ENCODE measurements at regions of chr6 and their contacts with region 1.

Region 1: GRCh38 chr6:108004861-108005260 is 46.9 kb upstream of the SEC63 start:
- DNase-seq: no peak
- H3K4me3 ChIP-seq: no peak overlapping the region
- H3K27ac ChIP-seq: no peak overlapping the region
- H3K4me1 ChIP-seq: no peaks in the 10 kb centered on the region
- H3K27me3 ChIP-seq: no peaks in the 10 kb centered on the region
- CTCF ChIP-seq: no peak

Region 2: GRCh38 chr6:107607116-107607515 is 397.7 kb before region 1 on chr6:
- CTCF ChIA-PET with region 1: no interaction called
- POLR2A ChIA-PET with region 1: no interaction called
- intact Hi-C with region 1: no loop called
- DNase-seq: peak in 1 of 2 experiments; percentile 60
- H3K4me3 ChIP-seq: no peak overlapping the region
- H3K27ac ChIP-seq: no peak overlapping the region
- H3K4me1 ChIP-seq: peaks cover 6% of the 10 kb centered on the region; the same call in 1 of the 2 replicates
- H3K27me3 ChIP-seq: no peaks in the 10 kb centered on the region
- CTCF ChIP-seq: no peak

Region 3: DNA sequence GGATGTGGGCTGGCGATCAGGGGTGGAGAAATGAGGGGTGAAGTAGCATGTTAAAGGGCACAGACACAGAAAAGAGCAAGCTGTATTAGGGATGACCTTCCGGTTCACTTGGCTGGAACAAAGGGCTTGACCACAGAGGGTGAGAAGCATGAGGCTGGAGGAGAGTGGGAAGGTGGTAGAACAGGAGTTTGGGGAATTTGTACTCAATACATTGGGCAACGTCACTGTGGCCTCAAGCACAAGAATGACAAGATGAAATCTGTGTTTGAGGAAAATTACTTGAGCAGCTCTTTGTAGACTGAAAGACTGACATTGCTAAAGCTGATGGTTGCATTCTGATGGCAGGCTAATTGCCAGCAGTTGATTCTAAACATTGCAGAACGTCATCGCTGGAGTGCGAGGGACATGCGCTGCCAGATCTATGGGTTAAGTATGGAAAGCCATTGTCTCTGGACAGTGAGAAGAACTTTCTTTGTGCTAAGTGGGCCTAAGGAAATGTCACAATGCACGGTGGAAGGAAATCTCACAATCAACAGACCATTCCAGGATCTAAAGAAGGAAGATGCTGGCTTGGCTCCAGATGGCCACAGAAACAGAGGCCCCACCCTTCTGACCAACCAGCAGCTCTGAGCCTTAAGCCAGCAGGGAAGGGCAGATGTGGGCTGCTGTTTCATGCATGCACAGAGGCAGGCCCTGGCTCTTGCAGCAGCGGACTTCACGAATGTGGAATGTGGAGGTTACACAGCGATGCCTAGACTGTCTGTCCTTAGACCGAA is 358.9 kb before region 1 on chr6:
- CTCF ChIA-PET with region 1: no interaction called
- POLR2A ChIA-PET with region 1: no interaction called
- intact Hi-C with region 1: no loop called
- DNase-seq: peak; percentile 23 to 84
- H3K4me3 ChIP-seq: no peak overlapping the region
- H3K27ac ChIP-seq: peak overlapping the region; percentile 35
- H3K4me1 ChIP-seq: peaks cover 40% of the 10 kb centered on the region
- H3K27me3 ChIP-seq: no peaks in the 10 kb centered on the region
- CTCF ChIP-seq: no peak

Region 4: DNA sequence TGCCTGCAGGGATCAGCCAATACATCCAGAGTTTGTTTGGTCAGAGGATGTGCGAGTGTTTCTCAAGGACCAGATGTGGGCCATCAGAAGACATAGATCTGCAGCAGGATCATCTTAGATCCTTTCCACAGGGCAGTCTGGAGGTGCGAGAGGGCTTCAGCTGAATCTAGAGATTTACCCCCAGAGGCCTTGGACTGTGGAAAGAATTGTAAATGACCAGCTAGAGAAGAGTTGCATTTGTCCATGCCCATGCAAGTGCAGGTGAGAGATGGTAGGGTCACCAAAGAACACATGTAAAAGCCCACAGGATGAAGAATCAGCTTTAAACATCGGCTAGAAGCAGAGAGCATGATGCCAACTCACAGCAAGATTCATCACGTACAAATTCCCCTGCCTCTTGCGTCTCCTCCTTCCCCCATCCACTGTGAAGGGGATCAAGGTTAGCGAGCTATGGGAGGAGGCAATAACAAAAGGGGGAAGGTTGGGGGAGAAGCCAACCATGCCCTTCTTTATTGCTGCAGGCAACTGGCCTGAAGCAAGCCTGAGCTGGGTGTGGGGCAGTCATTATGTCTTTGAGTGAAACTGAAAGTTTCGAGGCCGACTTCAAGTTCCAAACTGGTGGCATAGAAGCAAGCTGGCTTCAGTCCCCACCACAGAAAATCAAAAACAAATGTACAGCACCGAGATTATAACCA is 264.2 kb before region 1 on chr6:
- CTCF ChIA-PET with region 1: no interaction called
- POLR2A ChIA-PET with region 1: interaction called, 15 read pairs
- intact Hi-C with region 1: no loop called
- DNase-seq: no peak
- H3K4me3 ChIP-seq: no peak overlapping the region
- H3K27ac ChIP-seq: no peak overlapping the region
- H3K4me1 ChIP-seq: no peaks in the 10 kb centered on the region
- H3K27me3 ChIP-seq: peaks cover 83% of the 10 kb centered on the region
- CTCF ChIP-seq: no peak